Endothelial cell of umbilical vein (primary cell): ENCODE measurements at regions of chr14 and their contacts with region 1.

Region 1: GRCh38 chr14:38605193-38606114 is 349.6 kb upstream of the CLEC14A start:
- DNase-seq: peak; percentile 32
- H3K4me3 ChIP-seq: no peak overlapping the region
- H3K27ac ChIP-seq: no peak overlapping the region
- H3K4me1 ChIP-seq: no peaks in the 10 kb centered on the region
- H3K27me3 ChIP-seq: no peaks in the 10 kb centered on the region
- CTCF ChIP-seq: peak; percentile 7 to 22
- POLR2A ChIP-seq: no peak

Region 2: DNA sequence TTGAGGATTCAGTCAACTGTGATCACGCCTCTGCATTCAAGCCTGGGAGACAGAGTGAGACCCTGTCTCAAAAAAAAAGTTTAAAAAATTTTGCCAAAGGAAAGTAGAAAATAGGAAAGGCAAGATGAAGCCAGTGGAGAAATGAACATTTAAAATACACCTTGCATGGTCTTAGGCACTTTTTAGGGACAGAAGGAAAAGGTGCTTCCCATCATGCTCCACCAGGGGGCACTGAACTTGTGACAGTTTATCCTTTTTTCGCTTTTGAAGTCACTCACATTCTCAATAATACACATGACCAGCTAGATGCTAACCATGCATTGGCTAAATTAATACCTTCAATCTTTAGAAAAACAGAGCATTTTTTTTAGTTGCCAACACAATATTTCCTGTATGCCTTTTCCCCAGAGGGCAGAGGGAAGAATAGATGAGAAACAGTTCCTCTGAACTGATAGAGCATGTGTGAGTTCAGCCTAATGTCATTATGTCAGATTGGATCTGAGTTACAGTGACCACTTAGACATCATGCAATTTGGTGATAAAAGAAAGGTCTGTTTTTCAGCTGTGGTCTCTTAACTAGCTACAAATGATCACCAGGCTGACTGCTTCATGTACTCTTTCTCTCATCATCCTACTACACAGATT is 619.5 kb before region 1 on chr14:
- CTCF ChIA-PET with region 1: interaction called, 26 read pairs
- POLR2A ChIA-PET with region 1: no interaction called
- dilution Hi-C with region 1: no loop called
- intact Hi-C with region 1: loop called (anchors 1 kb)
- DNase-seq: peak; percentile 67
- H3K4me3 ChIP-seq: no peak overlapping the region
- H3K27ac ChIP-seq: no peak overlapping the region
- H3K4me1 ChIP-seq: no peaks in the 10 kb centered on the region
- H3K27me3 ChIP-seq: no peaks in the 10 kb centered on the region
- CTCF ChIP-seq: peak; percentile 63 to 83
- POLR2A ChIP-seq: no peak

Region 3: GRCh38 chr14:38248321-38249050 is 357.0 kb before region 1 on chr14:
- CTCF ChIA-PET with region 1: interaction called, 120 read pairs
- POLR2A ChIA-PET with region 1: interaction called, 5 read pairs
- dilution Hi-C with region 1: no loop called
- intact Hi-C with region 1: loop called (anchors 1 kb)
- DNase-seq: peak; percentile 39
- H3K4me3 ChIP-seq: no peak overlapping the region
- H3K27ac ChIP-seq: no peak overlapping the region
- H3K4me1 ChIP-seq: peaks cover 27% of the 10 kb centered on the region
- H3K27me3 ChIP-seq: no peaks in the 10 kb centered on the region
- CTCF ChIP-seq: peak; percentile 30
- POLR2A ChIP-seq: peak; percentile 39

Region 4: DNA sequence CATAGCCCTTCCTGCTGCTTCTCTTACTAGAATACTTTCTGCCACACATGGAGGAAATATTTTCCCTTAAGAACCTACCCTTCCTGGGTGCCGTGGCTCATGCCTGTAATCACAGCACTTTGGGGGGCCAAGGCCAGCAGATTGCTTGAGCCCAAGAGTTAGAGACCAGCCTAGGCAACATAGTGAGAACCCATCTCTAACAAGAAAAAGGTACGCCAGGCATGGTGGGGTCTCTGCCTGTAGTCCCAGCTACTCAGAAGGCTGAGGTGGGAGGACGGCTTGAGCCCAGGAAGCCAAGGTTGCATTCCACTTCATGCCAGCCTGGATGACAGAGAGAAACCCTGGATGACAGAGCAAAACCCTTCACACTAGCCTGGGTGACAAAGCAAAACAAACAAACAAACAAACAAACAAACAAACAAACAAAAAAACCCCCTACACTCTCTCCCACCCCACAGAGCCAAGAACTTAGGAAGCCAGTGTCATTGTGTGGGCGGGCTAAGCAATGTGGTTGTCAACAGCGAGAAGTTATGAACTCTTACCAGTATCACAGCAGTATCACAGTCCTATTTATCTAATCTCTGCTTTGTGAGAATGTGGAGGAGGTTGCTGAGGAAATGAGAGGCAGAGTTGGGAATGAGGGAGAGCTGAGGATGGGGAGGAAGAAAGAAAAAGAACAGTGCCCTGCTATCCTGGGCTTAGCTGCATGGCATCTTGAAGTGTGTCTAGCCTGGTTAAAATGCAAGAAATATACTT is 295.8 kb before region 1 on chr14:
- CTCF ChIA-PET with region 1: no interaction called
- POLR2A ChIA-PET with region 1: no interaction called
- dilution Hi-C with region 1: no loop called
- intact Hi-C with region 1: loop called (anchors 5 kb)
- DNase-seq: no peak
- H3K4me3 ChIP-seq: peak overlapping the region in 1 of 3 experiments; percentile 23
- H3K27ac ChIP-seq: peak overlapping the region; percentile 74
- H3K4me1 ChIP-seq: peaks cover 40% of the 10 kb centered on the region
- H3K27me3 ChIP-seq: no peaks in the 10 kb centered on the region
- CTCF ChIP-seq: no peak
- POLR2A ChIP-seq: no peak

Region 5: GRCh38 chr14:38405851-38406635 is 199.4 kb before region 1 on chr14:
- CTCF ChIA-PET with region 1: interaction called, 6 read pairs
- POLR2A ChIA-PET with region 1: no interaction called
- dilution Hi-C with region 1: no loop called
- intact Hi-C with region 1: loop called (anchors 10 kb)
- DNase-seq: peak; percentile 54
- H3K4me3 ChIP-seq: no peak overlapping the region
- H3K27ac ChIP-seq: peak overlapping the region; percentile 69
- H3K4me1 ChIP-seq: peaks cover 53% of the 10 kb centered on the region
- H3K27me3 ChIP-seq: no peaks in the 10 kb centered on the region
- CTCF ChIP-seq: no peak
- POLR2A ChIP-seq: no peak

Region 6: GRCh38 chr14:38867561-38868150 is 262.2 kb after region 1 on chr14:
- CTCF ChIA-PET with region 1: interaction called, 34 read pairs
- POLR2A ChIA-PET with region 1: no interaction called
- dilution Hi-C with region 1: no loop called
- intact Hi-C with region 1: loop called (anchors 1 kb)
- DNase-seq: peak; percentile 86
- H3K4me3 ChIP-seq: no peak overlapping the region
- H3K27ac ChIP-seq: no peak overlapping the region
- H3K4me1 ChIP-seq: peaks cover 5% of the 10 kb centered on the region
- H3K27me3 ChIP-seq: no peaks in the 10 kb centered on the region
- CTCF ChIP-seq: peak; percentile 75 to 88
- POLR2A ChIP-seq: no peak